Activated CD4-positive, alpha-beta T cell treated with anti-CD3 and anti-CD28 coated beads, Interleukin-2, amount 10 ng/mL, durations not matched to agents 7 days and 5 days (primary cell): ENCODE measurements at regions of chr1 and their contacts with region 1.

Region 1: DNA sequence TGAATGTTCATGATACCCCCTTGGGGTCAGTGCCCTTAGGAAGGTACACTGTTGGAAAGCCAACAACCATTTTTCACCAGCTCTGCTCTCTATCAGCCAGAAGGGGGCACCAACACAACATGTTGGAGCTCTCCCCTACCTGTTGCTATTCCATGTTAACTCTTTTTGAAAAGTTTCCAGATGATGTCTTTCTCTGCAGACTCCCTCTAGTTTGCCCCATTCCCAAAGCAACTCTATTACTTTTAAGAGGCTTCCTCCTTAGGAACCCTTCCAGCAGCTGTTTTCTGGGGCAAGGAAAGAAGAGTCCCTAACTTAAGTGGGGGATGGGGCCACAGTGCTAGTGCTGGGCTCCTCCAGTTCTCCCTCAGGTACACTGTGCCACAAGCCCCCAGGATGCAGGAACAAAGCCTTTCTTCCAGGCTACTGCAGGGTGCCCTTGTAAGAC is 22.9 kb upstream of the NDC1 start:
- DNase-seq: peak; percentile 66
- H3K4me3 Mint-ChIP-seq: no peak overlapping the region
- H3K27ac Mint-ChIP-seq: peak overlapping the region; percentile 68
- H3K4me1 Mint-ChIP-seq: peaks cover 14% of the 10 kb centered on the region
- H3K27me3 Mint-ChIP-seq: no peaks in the 10 kb centered on the region

Region 2: DNA sequence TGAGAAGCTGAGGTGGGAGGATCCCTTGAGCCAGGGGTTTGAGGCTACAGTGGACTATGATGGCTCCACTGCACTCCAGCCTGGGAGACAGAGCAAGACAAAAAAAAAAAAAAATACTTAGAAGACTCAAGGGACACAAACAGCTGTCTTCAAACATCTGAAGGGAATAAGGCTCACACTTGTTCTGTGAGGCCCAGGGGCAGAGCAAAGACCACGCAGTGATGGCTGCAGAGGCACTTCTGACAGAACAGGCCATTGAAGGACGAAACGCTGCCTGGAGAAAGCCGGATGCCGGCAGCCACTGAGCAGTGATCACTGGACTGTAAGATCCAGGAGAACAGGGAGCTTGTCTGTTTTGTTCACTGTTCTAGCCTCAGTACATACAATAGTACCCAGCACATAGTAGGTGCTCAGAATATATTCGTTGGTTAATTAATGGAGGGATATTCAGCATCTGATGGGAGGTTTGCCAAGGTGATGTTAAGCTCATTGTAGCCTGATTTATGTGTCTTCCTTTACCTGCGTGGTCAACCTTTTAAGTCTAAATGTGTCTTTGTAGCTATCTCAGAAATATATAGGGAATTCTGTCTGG is 10.8 kb before region 1 on chr1:
- CTCF ChIA-PET with region 1: interaction called, 10 read pairs
- POLR2A ChIA-PET with region 1: no interaction called
- DNase-seq: no peak
- H3K4me3 Mint-ChIP-seq: no peak overlapping the region
- H3K27ac Mint-ChIP-seq: no peak overlapping the region
- H3K4me1 Mint-ChIP-seq: no peaks in the 10 kb centered on the region
- H3K27me3 Mint-ChIP-seq: peaks cover 4% of the 10 kb centered on the region

Region 3: GRCh38 chr1:53959664-53960250 is 98.8 kb after region 1 on chr1:
- CTCF ChIA-PET with region 1: interaction called, 32 read pairs
- POLR2A ChIA-PET with region 1: interaction called, 3 read pairs
- DNase-seq: peak; percentile 57
- H3K4me3 Mint-ChIP-seq: no peak overlapping the region
- H3K27ac Mint-ChIP-seq: no peak overlapping the region
- H3K4me1 Mint-ChIP-seq: peaks cover 24% of the 10 kb centered on the region
- H3K27me3 Mint-ChIP-seq: no peaks in the 10 kb centered on the region